GM13976 (cell line): ENCODE measurements at regions of chrX and their contacts with region 1.

Region 1: DNA sequence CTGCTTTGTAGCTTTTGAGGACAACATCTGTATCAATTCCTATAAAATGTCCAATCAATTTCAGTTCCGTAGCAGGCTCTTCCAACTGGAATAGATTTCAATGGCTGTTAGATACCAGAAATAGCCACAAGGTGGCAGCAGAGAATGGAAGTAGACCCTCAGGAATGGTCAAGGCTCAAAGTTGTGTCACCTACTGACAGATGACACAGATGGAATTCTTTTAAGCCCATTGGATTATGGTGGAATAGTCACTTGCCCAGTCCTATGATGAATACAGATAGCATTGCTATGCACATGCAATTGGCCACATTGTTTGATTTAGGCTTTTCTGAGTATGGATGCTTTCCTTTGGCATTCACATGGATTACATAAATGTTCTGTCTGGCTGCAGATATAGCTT is 130.4 kb upstream of the RADX start:
- DNase-seq: no peak
- CTCF ChIP-seq: peak; percentile 67

Region 2: GRCh38 chrX:106100442-106100841 is 380.9 kb before region 1 on chrX:
- in situ Hi-C with region 1: no loop called
- DNase-seq: no peak
- CTCF ChIP-seq: no peak

Region 3: GRCh38 chrX:106317798-106318197 is 163.5 kb before region 1 on chrX:
- in situ Hi-C with region 1: no loop called
- DNase-seq: no peak
- CTCF ChIP-seq: no peak

Region 4: GRCh38 chrX:106791495-106791894 is 310.2 kb after region 1 on chrX:
- in situ Hi-C with region 1: loop called (anchors 25 kb)
- DNase-seq: no peak
- CTCF ChIP-seq: no peak